HEK293 (cell line): ENCODE measurements at regions of chr6 and their contacts with region 1.

Region 1: DNA sequence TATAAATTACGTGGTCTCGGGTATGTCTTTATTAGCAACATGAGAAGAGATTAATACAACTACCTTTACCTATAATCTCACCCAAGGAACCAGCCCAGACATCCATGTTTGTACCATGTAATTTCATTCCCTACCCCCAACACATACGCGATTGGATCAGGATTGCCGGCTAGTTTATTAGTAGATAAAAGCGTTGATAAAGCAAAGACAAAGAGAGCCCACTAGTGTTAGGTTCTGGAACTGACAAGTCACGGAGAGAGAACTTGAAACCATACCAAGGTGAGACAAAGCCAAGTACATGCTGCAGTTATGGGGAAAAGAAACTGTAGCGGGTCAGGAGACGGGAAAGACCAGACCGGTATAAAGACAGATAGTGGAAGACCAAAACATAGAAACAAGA is 37.4 kb upstream of the FAM135A start:
- H3K4me3 ChIP-seq: no peak overlapping the region
- H3K27ac ChIP-seq: no peak overlapping the region
- H3K4me1 ChIP-seq: no peaks in the 10 kb centered on the region
- CTCF ChIP-seq: no peak

Region 2: GRCh38 chr6:70385901-70386300 is 10.0 kb after region 1 on chr6:
- CTCF ChIA-PET with region 1: interaction called, 36 read pairs
- POLR2A ChIA-PET with region 1: no interaction called
- H3K4me3 ChIP-seq: no peak overlapping the region
- H3K27ac ChIP-seq: no peak overlapping the region
- H3K4me1 ChIP-seq: no peaks in the 10 kb centered on the region; the same call in 1 of the 2 replicates
- CTCF ChIP-seq: no peak